ENCODE measurements at regions of chr6 and their contacts with region 1.

Region 1: DNA sequence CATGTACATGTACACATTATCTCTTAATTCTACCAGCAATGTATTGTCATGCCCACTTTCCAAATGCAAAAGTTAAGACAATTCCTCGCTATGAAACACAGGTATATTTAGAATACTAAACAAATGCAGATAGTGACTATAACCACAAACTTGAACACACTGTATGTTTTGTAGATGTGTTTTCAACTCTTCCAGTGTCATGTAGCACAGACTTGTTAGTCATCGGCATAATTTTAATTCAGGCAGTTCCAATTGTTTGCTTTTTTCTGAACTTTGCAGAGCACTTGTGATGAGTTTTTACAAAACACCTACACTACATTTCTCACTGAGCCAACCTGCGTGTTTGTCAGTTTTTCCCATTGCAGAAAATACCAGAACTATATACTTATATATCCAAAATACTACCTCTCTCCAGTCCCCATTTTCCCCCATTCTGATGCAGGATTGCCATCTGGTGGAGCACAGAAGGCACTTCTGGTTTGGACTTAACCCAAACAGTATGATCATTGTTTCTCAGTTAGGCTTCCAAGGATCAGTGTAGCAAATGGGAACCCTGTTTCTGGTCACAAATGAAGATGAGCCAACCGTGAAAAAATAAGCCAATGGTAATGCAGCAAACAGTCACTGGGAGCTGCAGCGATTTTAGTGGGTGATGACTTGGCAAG is 143.4 kb downstream of the ADGRB3 start:
- DNase-seq: peak; percentile 13
- H3K4me3 Mint-ChIP-seq: no peak overlapping the region
- H3K27ac Mint-ChIP-seq: no peak overlapping the region
- H3K4me1 Mint-ChIP-seq: no peaks in the 10 kb centered on the region
- H3K27me3 Mint-ChIP-seq: no peaks in the 10 kb centered on the region

Region 2: GRCh38 chr6:68572525-68572924 is 206.0 kb before region 1 on chr6:
- CTCF ChIA-PET with region 1: interaction called, 7 read pairs
- intact Hi-C with region 1: loop called (anchors 1 kb)
- DNase-seq: peak; percentile 20
- H3K4me3 Mint-ChIP-seq: no peak overlapping the region
- H3K27ac Mint-ChIP-seq: no peak overlapping the region
- H3K4me1 Mint-ChIP-seq: no peaks in the 10 kb centered on the region
- H3K27me3 Mint-ChIP-seq: peaks cover 5% of the 10 kb centered on the region

Measured in activated naive CD4-positive, alpha-beta T cell treated with anti-CD3 and anti-CD28 coated beads for 36 hours (primary cell).